Activated CD4-positive, alpha-beta T cell treated with anti-CD3 and anti-CD28 coated beads, Interleukin-2, amount 10 ng/mL, durations not matched to agents 24 days and 14 days (primary cell): ENCODE measurements at regions of chr19 and their contacts with region 1.

Region 1: GRCh38 chr19:48835734-48836088 is 580 bp downstream of the HSD17B14 start:
- DNase-seq: peak; percentile 98
- H3K4me3 Mint-ChIP-seq: peak overlapping the region; percentile 87
- H3K27ac Mint-ChIP-seq: peak overlapping the region; percentile 76
- H3K4me1 Mint-ChIP-seq: peaks cover 20% of the 10 kb centered on the region
- H3K27me3 Mint-ChIP-seq: peaks cover 8% of the 10 kb centered on the region

Region 2: DNA sequence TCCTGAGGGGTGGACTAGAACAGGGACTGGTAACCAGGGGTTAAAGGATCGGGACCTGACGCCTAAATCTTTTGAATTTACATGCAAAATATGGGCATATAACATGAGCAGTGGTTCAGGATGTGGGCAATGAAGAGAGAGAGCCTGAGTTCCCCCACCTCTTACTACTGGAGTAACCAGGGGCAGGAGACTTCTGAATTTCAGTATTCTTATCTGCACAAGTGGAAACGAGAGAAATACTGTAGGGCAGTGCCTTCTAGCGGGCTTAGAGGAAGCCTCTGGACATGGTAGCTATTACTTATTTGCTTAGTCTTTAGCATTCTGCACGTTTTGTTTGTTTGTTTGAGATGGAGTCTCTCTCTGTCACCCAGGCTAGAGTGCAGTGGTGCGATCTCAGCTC is 51.2 kb before region 1 on chr19:
- intact Hi-C with region 1: loop called (anchors 1 kb)
- DNase-seq: no peak
- H3K4me3 Mint-ChIP-seq: no peak overlapping the region
- H3K27ac Mint-ChIP-seq: no peak overlapping the region
- H3K4me1 Mint-ChIP-seq: peaks cover 2% of the 10 kb centered on the region
- H3K27me3 Mint-ChIP-seq: peaks cover 12% of the 10 kb centered on the region

Region 3: GRCh38 chr19:48795055-48795684 is 40.5 kb before region 1 on chr19:
- intact Hi-C with region 1: loop called (anchors 1 kb)
- DNase-seq: peak; percentile 95
- H3K4me3 Mint-ChIP-seq: peak overlapping the region; percentile 95
- H3K27ac Mint-ChIP-seq: peak overlapping the region; percentile 90
- H3K4me1 Mint-ChIP-seq: peaks cover 12% of the 10 kb centered on the region
- H3K27me3 Mint-ChIP-seq: no peaks in the 10 kb centered on the region

Region 4: DNA sequence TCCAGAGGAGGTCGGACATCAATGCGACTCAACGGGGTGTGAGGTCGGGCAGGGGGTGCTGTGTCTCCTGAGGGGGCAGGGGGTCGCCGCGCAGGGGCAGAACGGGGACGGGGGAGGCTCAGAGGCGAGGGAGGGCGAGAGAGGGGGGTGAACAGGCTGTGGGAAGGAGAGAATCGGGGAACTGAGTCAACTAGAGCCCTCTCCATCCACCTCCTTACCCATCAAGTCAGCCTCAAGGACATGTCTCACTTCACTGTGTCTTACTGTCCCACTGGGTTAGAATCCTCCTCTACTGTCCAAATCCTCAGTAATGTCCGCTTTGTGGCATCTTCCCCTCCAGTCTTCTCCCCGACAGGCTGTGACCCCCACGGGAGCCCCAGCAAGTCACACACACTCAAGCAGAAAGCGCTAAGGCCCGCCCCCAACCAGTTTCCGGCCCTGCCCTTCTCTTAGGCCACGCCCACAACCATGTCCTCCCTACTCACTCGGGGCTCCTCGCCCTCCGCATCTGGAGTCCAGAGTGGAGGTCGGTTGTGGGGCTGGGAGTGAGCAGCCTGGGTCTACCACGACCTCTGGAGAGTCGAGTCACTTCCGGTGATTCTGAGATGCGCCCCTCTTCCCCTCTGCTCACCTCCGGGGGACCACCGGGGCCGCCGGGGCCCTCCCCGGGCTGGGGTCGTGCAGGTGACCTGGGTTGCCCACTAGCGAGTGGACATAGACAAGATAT is 23.4 kb after region 1 on chr19:
- intact Hi-C with region 1: no loop called
- DNase-seq: peak; percentile 93
- H3K4me3 Mint-ChIP-seq: peak overlapping the region; percentile 89
- H3K27ac Mint-ChIP-seq: peak overlapping the region; percentile 84
- H3K4me1 Mint-ChIP-seq: peaks cover 5% of the 10 kb centered on the region
- H3K27me3 Mint-ChIP-seq: no peaks in the 10 kb centered on the region